ENCODE measurements at regions of chr4 and their contacts with region 1.

Region 1: DNA sequence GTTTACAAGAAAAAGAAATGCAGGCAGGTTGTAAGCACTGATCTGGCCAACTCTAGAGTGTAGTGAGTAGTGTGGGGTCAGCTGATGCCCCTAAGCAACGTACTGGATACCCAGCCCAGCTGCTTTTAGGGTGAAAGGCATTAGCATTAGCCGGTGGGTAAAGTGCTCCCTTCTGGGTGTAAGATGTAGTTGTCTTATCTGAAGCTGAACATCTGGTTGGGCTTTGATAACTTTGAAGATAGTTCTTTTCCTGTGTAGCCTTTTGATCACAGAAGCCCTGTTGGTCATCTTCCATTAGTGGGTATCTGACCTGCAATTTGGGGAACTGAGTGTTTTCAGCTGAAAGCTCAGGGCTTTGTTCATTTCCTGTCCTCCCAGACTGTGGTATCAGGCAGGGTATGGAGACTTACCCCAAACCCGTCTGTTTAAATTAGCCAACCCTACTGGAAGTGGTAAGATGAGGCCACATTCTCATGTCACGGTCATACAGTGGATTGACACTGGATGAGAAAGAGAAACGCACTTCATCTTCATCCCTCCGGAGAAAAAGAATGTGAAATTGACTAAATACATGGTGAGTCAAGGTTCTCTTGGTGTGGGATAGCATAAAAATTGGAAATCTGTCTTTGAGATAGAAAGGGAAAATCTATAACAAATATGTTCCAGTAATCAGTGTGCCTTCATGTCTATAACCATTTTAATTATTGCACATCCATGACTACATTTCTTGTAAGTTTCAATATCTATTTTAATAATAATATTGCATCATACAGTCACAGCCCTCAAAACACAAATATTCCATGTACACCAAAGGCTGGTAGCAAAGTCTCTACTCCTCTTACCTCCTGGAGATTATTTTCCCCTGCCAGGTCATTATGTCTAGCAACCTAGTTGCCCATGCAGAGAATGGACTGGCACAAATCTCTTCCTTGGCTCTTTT is 8.7 kb downstream of the RHOH start:
- DNase-seq: peak; percentile 96
- ATAC-seq: peak; percentile 57
- H3K4me3 ChIP-seq: peak overlapping the region; percentile 72
- H3K27ac ChIP-seq: peak overlapping the region; percentile 92
- H3K4me1 ChIP-seq: peaks cover 22% of the 10 kb centered on the region
- H3K27me3 ChIP-seq: no peaks in the 10 kb centered on the region
- CTCF ChIP-seq: no peak
- EP300 ChIP-seq: peak; percentile 78 to 86
- POLR2A ChIP-seq: peak; percentile 57
- RAD21 ChIP-seq: 0 out of 2 replicates have a peak, but pooled peaks have one; percentile 1

Region 2: DNA sequence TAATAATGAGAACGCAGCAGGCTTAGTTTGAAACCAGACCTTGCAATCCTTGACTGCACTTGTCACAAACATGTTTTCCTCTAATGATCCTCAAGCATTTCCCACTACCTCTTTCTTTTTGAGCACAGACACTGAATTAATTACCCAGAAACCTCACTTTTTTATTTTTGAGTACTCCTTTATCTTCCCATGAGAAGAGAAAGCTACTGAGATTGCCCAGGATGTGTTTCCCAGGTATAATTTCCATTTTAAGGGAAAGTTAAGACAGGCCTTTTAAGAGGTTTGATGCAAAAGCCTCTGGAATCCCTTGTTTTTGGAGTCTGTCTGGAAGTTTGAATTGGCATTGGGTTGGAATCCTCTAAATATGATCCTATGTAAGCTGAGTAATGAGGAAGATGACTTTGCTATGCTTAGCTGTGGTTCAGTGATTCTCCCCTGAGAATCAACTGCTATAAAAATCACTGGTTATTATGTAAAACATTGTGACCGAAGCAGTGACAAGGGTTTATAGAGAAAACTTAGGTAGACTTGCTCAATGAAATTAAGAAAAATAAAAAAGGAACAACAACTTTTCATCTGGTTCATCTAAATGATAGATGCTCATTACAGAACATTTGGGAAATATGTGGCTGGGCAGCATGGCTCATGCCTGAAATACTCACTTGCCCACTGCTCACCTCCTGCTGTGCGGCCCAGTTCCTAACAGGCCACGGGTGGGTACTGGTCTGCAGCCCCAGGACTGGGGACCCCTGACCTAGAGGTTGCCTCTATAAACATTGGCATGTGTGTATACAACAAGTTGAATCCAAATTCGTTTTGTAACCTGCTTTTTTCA is 19.5 kb before region 1 on chr4:
- CTCF ChIA-PET with region 1: interaction called, 16 read pairs
- POLR2A ChIA-PET with region 1: interaction called, 214 read pairs
- RAD21 ChIA-PET with region 1: interaction called, 179 read pairs
- SMC1A ChIA-PET with region 1: interaction called, 336 read pairs
- in situ Hi-C with region 1: no loop called
- intact Hi-C with region 1: loop called (anchors 2 kb)
- DNase-seq: peak; percentile 94
- ATAC-seq: peak; percentile 66
- H3K4me3 ChIP-seq: no peak overlapping the region
- H3K27ac ChIP-seq: peak overlapping the region; percentile 89
- H3K4me1 ChIP-seq: peaks cover 46% of the 10 kb centered on the region
- H3K27me3 ChIP-seq: no peaks in the 10 kb centered on the region
- CTCF ChIP-seq: no peak
- EP300 ChIP-seq: peak; percentile 81 to 90
- POLR2A ChIP-seq: 0 out of 2 replicates have a peak, but pooled peaks have one; percentile 31
- RAD21 ChIP-seq: 0 out of 2 replicates have a peak, but pooled peaks have one; percentile 0

Region 3: GRCh38 chr4:40193016-40193571 is 12.4 kb before region 1 on chr4:
- CTCF ChIA-PET with region 1: interaction called, 33 read pairs
- POLR2A ChIA-PET with region 1: interaction called, 214 read pairs
- RAD21 ChIA-PET with region 1: interaction called, 179 read pairs
- SMC1A ChIA-PET with region 1: interaction called, 336 read pairs
- in situ Hi-C with region 1: no loop called
- intact Hi-C with region 1: no loop called
- DNase-seq: no peak
- ATAC-seq: peak; percentile 40
- H3K4me3 ChIP-seq: peak overlapping the region; percentile 88
- H3K27ac ChIP-seq: peak overlapping the region; percentile 92
- H3K4me1 ChIP-seq: peaks cover 9% of the 10 kb centered on the region
- H3K27me3 ChIP-seq: no peaks in the 10 kb centered on the region
- CTCF ChIP-seq: 0 out of 6 replicates have a peak, but pooled peaks of 1 of the 3 experiments have one; percentile 3
- EP300 ChIP-seq: 0 out of 4 replicates have a peak, but pooled peaks of 1 of the 2 experiments have one; percentile 25
- POLR2A ChIP-seq: peak; percentile 81
- RAD21 ChIP-seq: peak; percentile 17; the same call in 1 of the 2 replicates

Region 4: GRCh38 chr4:40221744-40222143 is 16.2 kb after region 1 on chr4:
- CTCF ChIA-PET with region 1: interaction called, 8 read pairs
- POLR2A ChIA-PET with region 1: interaction called, 16 read pairs
- RAD21 ChIA-PET with region 1: interaction called, 56 read pairs
- SMC1A ChIA-PET with region 1: interaction called, 160 read pairs
- in situ Hi-C with region 1: no loop called
- intact Hi-C with region 1: loop called (anchors 2 kb)
- DNase-seq: no peak
- ATAC-seq: no peak
- H3K4me3 ChIP-seq: no peak overlapping the region
- H3K27ac ChIP-seq: peak overlapping the region; percentile 32
- H3K4me1 ChIP-seq: peaks cover 20% of the 10 kb centered on the region
- H3K27me3 ChIP-seq: no peaks in the 10 kb centered on the region
- CTCF ChIP-seq: no peak
- EP300 ChIP-seq: no peak
- POLR2A ChIP-seq: no peak
- RAD21 ChIP-seq: no peak

Region 5: GRCh38 chr4:40228497-40229365 is 23.2 kb after region 1 on chr4:
- CTCF ChIA-PET with region 1: interaction called, 8 read pairs
- POLR2A ChIA-PET with region 1: interaction called, 16 read pairs
- RAD21 ChIA-PET with region 1: interaction called, 56 read pairs
- SMC1A ChIA-PET with region 1: interaction called, 160 read pairs
- in situ Hi-C with region 1: no loop called
- intact Hi-C with region 1: loop called (anchors 1 kb)
- DNase-seq: peak; percentile 77
- ATAC-seq: peak; percentile 56
- H3K4me3 ChIP-seq: peak overlapping the region; percentile 13; the same call in 1 of the 2 replicates
- H3K27ac ChIP-seq: peak overlapping the region; percentile 84
- H3K4me1 ChIP-seq: peaks cover 59% of the 10 kb centered on the region
- H3K27me3 ChIP-seq: no peaks in the 10 kb centered on the region
- CTCF ChIP-seq: peak; percentile 28 to 65 (median 45); a peak in 5 of 6 replicates
- EP300 ChIP-seq: peak in 1 of 2 experiments; percentile 66; a peak in 3 of 4 replicates
- POLR2A ChIP-seq: no peak
- RAD21 ChIP-seq: peak; percentile 44

Region 6: DNA sequence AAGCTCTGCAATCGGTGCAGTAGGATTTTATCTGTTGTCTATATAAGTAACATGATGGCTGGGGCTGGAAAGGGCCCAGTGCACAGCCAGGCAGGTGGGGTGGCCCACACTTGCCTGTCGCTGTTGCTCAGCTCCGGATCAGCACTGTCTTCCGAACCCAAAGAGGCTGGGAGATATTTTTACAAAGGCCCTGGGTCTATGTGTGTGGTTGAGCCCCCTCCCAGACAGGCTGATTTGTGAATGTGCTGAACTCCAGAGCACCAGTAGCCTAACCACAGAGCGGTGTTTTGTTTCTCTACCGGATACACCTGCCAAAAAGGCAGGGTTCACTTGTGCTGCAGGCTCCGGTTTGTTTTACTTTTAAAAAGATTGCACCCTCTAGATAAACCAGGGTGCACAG is 96.1 kb after region 1 on chr4:
- CTCF ChIA-PET with region 1: interaction called, 53 read pairs
- POLR2A ChIA-PET with region 1: interaction called, 24 read pairs
- RAD21 ChIA-PET with region 1: interaction called, 356 read pairs
- SMC1A ChIA-PET with region 1: interaction called, 374 read pairs
- in situ Hi-C with region 1: loop called (anchors 5 kb)
- intact Hi-C with region 1: loop called (anchors 1 kb)
- DNase-seq: peak; percentile 85
- ATAC-seq: peak; percentile 67
- H3K4me3 ChIP-seq: peak overlapping the region; percentile 25; the same call in 1 of the 2 replicates
- H3K27ac ChIP-seq: peak overlapping the region; percentile 56
- H3K4me1 ChIP-seq: peaks cover 56% of the 10 kb centered on the region
- H3K27me3 ChIP-seq: no peaks in the 10 kb centered on the region
- CTCF ChIP-seq: no peak
- EP300 ChIP-seq: peak; percentile 65 to 90; a peak in 3 of 4 replicates
- POLR2A ChIP-seq: peak; percentile 62
- RAD21 ChIP-seq: no peak

Region 7: GRCh38 chr4:41050866-41051775 is 845.6 kb after region 1 on chr4:
- CTCF ChIA-PET with region 1: no interaction called
- POLR2A ChIA-PET with region 1: no interaction called
- RAD21 ChIA-PET with region 1: no interaction called
- SMC1A ChIA-PET with region 1: no interaction called
- in situ Hi-C with region 1: no loop called
- intact Hi-C with region 1: no loop called
- DNase-seq: no peak
- ATAC-seq: no peak
- H3K4me3 ChIP-seq: no peak overlapping the region
- H3K27ac ChIP-seq: no peak overlapping the region
- H3K4me1 ChIP-seq: no peaks in the 10 kb centered on the region
- H3K27me3 ChIP-seq: no peaks in the 10 kb centered on the region
- CTCF ChIP-seq: no peak
- EP300 ChIP-seq: no peak
- POLR2A ChIP-seq: no peak
- RAD21 ChIP-seq: no peak

Measured in GM12878 (cell line).